Natural killer cell (primary cell): ENCODE measurements at regions of chr7 and their contacts with region 1.

Region 1: GRCh38 chr7:30134611-30135545 is at the start of gene MTURN:
- DNase-seq: peak; percentile 88 to 96
- ATAC-seq: peak; percentile 80 to 93 (median 88)
- H3K4me3 ChIP-seq: peak within 1 kb of the TSS; percentile 90
- H3K4me3 Mint-ChIP-seq: peak within 1 kb of the TSS; percentile 93
- H3K27ac ChIP-seq: peak within 1 kb of the TSS; percentile 59
- H3K27ac Mint-ChIP-seq: peak within 1 kb of the TSS; percentile 78 to 89
- H3K4me1 ChIP-seq: peaks cover 12% of the 10 kb centered on the region
- H3K4me1 Mint-ChIP-seq: peaks cover 6 to 18% of the 10 kb centered on the region in 2 donors
- H3K27me3 ChIP-seq: no peaks in the 10 kb centered on the region
- H3K27me3 Mint-ChIP-seq: peaks cover 5 to 7% of the 10 kb centered on the region in 2 donors
- CTCF ChIP-seq: no peak
- total RNA-seq, gene MTURN: 31.6 to 37.3 (median 32.8) TPM

Region 2: GRCh38 chr7:28956620-28957031 is 1178.3 kb before region 1 on chr7:
- intact Hi-C with region 1: no loop called
- DNase-seq: peak in 1 of 2 donors; percentile 24
- ATAC-seq: peak; percentile 27 to 48 (median 48)
- H3K4me3 ChIP-seq: peak overlapping the region; percentile 34
- H3K4me3 Mint-ChIP-seq: peak overlapping the region; percentile 79
- H3K27ac ChIP-seq: no peak overlapping the region
- H3K27ac Mint-ChIP-seq: no peak overlapping the region
- H3K4me1 ChIP-seq: peaks cover 34% of the 10 kb centered on the region
- H3K4me1 Mint-ChIP-seq: peaks cover 14 to 17% of the 10 kb centered on the region in 2 donors
- H3K27me3 ChIP-seq: peaks cover 42% of the 10 kb centered on the region
- H3K27me3 Mint-ChIP-seq: peaks cover 48 to 55% of the 10 kb centered on the region in 2 donors
- CTCF ChIP-seq: peak; percentile 54

Region 3: DNA sequence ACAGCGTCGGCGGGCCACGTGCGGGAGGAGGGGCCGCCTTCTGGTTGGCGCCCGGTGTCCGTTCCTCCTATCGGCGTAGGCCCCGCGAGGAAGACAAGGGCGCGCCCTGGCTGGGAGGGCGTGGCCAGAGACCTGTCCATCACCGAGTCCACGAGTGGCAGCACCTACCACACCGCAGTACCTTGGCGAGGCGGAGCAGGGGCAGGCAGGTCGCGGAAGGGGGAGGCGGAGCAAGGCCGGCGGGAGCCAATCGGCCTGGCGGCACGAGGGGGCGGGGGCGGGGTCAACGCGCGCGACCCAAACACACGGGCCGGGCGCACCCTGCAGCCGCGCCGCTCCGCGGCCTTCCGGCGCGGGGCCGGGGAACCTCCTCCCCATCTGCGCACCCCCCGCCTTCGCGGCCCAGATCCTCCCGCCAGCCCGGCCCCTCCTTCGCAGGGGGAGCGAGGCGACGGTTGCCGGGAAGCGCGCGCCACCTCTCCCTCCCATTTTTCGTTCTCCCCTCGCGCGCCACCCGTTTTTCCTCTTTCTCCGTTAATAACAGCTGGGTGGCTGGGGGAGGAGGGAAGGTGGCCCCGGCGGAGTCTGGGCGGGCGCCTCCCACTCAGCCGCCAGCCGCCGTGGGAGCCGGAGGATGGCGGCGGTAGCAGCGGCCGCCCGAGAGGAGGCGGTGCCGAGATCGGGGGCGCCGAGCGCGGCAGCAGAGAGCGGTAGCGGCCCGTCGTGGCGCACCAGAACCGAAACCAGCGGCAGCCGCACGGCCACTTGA is 149.6 kb after region 1 on chr7 and contains the start of gene ZNRF2:
- intact Hi-C with region 1: loop called (anchors 10 kb)
- DNase-seq: peak; percentile 96 to 100
- ATAC-seq: peak; percentile 81 to 94 (median 83)
- H3K4me3 ChIP-seq: peak within 1 kb of the TSS; percentile 65
- H3K4me3 Mint-ChIP-seq: peak within 1 kb of the TSS; percentile 84
- H3K27ac ChIP-seq: peak within 1 kb of the TSS; percentile 90
- H3K27ac Mint-ChIP-seq: peak within 1 kb of the TSS; percentile 89 to 98
- H3K4me1 ChIP-seq: peaks cover 8% of the 10 kb centered on the region
- H3K4me1 Mint-ChIP-seq: peaks cover 52 to 53% of the 10 kb centered on the region in 2 donors
- H3K27me3 ChIP-seq: no peaks in the 10 kb centered on the region
- H3K27me3 Mint-ChIP-seq: no peaks in the 10 kb centered on the region
- CTCF ChIP-seq: peak; percentile 25
- total RNA-seq, gene ZNRF2: 35.0 to 43.7 (median 36.3) TPM